RWPE1 (cell line): ENCODE measurements at regions of chr7 and their contacts with region 1.

Region 1: DNA sequence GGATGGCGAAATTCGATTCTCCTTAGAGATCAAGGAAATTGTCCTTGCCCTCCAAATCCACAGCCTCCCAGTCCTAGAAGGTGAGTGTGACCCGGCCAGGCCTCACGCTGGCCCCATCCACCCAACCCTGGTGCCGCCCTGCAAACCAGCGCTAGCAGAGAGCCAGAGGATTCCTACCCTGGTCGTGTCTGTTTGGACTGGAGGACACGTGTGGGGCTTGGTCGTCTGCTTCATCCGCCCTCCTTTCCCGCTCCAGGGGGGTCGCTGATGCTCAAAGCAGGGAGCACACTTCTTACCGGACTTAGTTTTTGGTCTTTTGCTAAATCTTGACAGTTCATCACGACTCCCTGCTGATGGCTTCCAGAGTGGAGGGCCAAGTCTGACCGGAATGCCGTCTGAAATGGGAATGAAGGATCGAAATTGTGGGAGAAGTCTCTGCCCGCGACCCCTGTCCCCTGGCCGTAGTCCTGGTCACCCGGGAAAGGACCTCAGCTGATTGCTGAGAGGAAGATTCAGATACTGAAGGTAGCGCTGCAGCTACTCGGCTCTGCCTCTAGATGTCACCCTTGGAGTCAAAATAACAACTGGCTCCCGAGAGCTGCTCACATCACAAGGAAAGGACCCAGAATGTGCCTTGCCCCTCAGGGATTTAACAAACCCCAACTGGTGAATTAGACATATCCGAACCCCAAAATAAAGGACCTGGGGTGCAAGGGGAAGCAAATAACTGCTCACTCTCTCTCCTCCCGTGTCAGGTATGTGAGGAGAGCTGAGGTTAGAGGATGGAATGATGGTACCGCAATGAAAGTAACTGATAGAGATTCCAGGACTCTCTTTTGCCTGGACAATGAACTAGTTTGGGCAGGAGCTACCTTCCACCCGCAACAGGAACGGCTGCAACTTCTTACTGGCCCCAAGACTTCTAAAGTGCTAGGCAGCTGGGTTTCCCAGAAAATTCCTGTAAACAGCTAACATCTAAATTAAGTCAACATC is 23.5 kb upstream of the ORC5 start:
- DNase-seq: peak; percentile 56
- H3K27ac ChIP-seq: no peak overlapping the region
- CTCF ChIP-seq: peak; percentile 94

Region 2: DNA sequence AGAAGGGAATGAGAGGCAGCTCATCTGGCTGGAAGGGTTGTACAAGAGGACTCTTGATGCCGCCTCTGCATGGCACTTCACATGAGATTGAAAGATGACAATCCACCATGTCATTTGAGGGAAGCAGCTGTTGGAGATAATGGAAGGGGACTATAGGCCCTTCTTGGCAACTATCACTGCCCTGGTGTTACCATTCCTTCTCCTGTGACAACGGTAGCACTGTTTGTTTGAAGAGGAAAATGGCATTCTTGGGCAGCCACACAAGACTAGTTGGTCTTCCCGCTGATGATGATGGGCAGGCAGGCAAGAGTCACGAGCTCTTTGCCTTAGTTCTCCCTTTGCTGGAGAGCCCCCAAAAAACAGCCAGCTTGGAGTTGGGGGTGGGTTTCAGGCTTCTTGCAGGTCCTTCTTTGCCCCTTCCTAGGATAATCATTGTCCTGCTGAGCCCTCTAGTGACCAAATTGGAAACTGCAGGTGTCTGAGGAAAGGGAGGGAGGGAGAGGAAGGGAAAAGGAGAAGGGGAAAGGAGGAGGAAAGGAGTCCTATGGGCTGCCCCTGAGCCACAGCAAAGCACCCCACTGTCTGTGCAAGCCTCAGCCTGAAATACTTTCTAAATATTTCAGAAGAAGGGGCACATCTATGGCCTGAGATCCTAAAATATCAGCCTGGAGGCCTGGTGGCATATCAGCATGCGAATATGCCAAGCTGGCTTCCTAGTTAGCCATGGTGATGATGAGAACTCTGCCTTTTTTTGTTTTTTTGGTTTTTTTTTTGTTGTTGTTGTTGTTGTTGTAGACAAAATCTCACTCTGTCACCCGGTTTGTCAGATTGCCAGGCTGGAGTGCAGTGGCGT is 617.0 kb after region 1 on chr7:
- CTCF ChIA-PET with region 1: interaction called, 18 read pairs
- POLR2A ChIA-PET with region 1: no interaction called
- DNase-seq: peak; percentile 63
- H3K27ac ChIP-seq: no peak overlapping the region
- CTCF ChIP-seq: peak; percentile 96